T-cell (primary cell): ENCODE measurements at regions of chr22 and their contacts with region 1.

Region 1: GRCh38 chr22:38429499-38430068 is 25.4 kb downstream of the KCNJ4 start:
- DNase-seq: no peak
- ATAC-seq: no peak
- H3K4me3 ChIP-seq: no peak overlapping the region
- H3K4me3 Mint-ChIP-seq: no peak overlapping the region
- H3K27ac ChIP-seq: no peak overlapping the region
- H3K27ac Mint-ChIP-seq: no peak overlapping the region
- H3K4me1 ChIP-seq: no peaks in the 10 kb centered on the region
- H3K4me1 Mint-ChIP-seq: no peaks in the 10 kb centered on the region
- H3K27me3 ChIP-seq: peaks cover 0 to 13% of the 10 kb centered on the region in 2 experiments
- H3K27me3 Mint-ChIP-seq: peaks cover 0 to 1% of the 10 kb centered on the region in 2 donors

Region 2: DNA sequence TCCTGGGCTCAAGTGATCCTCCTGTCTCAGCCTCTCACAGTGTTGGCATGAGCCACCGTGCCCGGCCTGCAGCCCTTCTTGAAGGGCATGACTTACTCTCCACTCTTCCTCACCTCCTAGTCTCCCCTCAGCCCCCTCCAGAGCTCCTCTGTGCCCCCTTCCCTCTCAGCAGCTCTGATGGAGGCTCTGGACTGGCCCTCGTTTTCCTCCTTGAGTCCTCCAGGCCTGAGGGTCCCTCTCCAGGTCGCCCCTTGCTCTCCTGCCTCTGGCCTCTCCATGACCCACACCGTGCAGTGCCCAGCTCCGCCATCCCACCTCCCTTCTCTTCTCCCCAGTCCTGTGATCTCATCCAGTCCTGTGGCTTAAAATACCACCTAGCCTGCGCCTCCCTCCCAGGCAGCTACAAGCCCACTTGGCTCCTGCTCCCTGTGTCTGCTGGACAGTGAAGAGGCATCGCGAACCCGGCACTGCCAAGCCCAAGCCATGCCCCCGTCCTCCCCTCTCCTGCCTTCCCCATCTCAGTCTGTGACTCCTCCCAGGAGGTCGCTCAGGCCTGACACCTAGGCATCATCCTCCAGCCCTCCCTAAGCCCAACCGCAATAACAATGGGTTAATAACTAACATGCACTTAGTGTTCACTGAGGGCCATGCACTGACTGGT is 13.5 kb after region 1 on chr22:
- CTCF ChIA-PET with region 1: no interaction called
- POLR2A ChIA-PET with region 1: no interaction called
- DNase-seq: no peak
- ATAC-seq: no peak
- H3K4me3 ChIP-seq: no peak overlapping the region
- H3K4me3 Mint-ChIP-seq: no peak overlapping the region
- H3K27ac ChIP-seq: no peak overlapping the region
- H3K27ac Mint-ChIP-seq: no peak overlapping the region
- H3K4me1 ChIP-seq: no peaks in the 10 kb centered on the region
- H3K4me1 Mint-ChIP-seq: no peaks in the 10 kb centered on the region
- H3K27me3 ChIP-seq: peaks cover 0 to 38% of the 10 kb centered on the region in 2 experiments
- H3K27me3 Mint-ChIP-seq: peaks cover 5 to 15% of the 10 kb centered on the region in 2 donors

Region 3: DNA sequence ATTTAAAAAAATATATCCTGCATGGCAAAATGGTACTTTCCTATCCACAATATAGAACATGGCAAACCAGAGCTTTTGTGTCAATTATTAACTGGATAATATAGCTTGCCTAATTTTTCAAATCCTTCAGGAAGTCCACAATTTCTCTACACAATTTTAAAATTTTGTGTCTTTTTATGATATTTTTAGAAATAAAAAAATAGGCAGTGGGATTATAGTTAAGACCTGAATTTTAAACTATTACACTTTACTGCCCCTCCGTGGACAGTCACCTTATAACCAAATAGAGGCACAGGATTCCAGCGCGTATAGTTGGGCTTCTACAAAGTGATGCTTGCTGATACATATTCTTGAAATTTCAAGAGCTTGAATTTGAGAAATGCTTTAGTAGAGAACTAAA is 142.5 kb after region 1 on chr22:
- CTCF ChIA-PET with region 1: no interaction called
- POLR2A ChIA-PET with region 1: interaction called in 1 of 2 experiments, 10 read pairs
- DNase-seq: peak in 17 of 35 experiments; percentile 5 to 61 (median 15)
- ATAC-seq: no peak
- H3K4me3 ChIP-seq: no peak overlapping the region
- H3K4me3 Mint-ChIP-seq: no peak overlapping the region
- H3K27ac ChIP-seq: no peak overlapping the region
- H3K27ac Mint-ChIP-seq: no peak overlapping the region
- H3K4me1 ChIP-seq: peaks cover 9 to 19% of the 10 kb centered on the region in 2 experiments
- H3K4me1 Mint-ChIP-seq: peaks cover 12 to 18% (median 15%) of the 10 kb centered on the region in 3 donors
- H3K27me3 ChIP-seq: no peaks in the 10 kb centered on the region
- H3K27me3 Mint-ChIP-seq: no peaks in the 10 kb centered on the region

Region 4: DNA sequence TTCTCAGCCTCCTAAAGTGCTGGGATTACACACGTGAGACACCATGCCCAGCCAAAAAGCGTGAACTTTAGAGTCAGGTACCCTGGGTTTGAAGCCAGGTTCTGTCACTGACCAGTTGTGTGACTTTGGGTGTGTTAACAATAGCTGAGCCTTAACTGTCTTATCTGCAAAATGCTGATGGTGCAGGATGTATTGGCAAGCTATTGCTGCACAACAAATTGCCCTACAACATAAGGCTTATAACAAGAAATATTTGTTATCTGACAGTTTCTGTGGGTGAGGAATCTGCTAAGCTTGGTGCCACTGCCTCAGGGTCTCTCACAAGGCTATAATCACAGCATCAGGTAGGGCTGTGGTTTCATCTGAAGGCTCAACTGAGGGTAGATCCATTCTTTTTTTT is 942.1 kb after region 1 on chr22:
- CTCF ChIA-PET with region 1: no interaction called
- POLR2A ChIA-PET with region 1: interaction called in 1 of 2 experiments, 10 read pairs
- DNase-seq: no peak
- ATAC-seq: no peak
- H3K4me3 ChIP-seq: no peak overlapping the region
- H3K4me3 Mint-ChIP-seq: no peak overlapping the region
- H3K27ac ChIP-seq: no peak overlapping the region
- H3K27ac Mint-ChIP-seq: no peak overlapping the region
- H3K4me1 ChIP-seq: no peaks in the 10 kb centered on the region
- H3K4me1 Mint-ChIP-seq: no peaks in the 10 kb centered on the region
- H3K27me3 ChIP-seq: peaks cover 0 to 30% of the 10 kb centered on the region in 2 experiments
- H3K27me3 Mint-ChIP-seq: peaks cover 0 to 2% of the 10 kb centered on the region in 2 donors